Naive thymus-derived CD4-positive, alpha-beta T cell (primary cell): ENCODE measurements at regions of chr17 and their contacts with region 1.

Region 1: GRCh38 chr17:732067-732901 is at the start of gene TLCD3A:
- DNase-seq: peak in 6 of 9 donors; percentile 13 to 80 (median 26)
- ATAC-seq: peak; percentile 82
- H3K4me3 ChIP-seq: peak within 1 kb of the TSS; percentile 41
- H3K4me3 Mint-ChIP-seq: peak within 1 kb of the TSS; percentile 67 to 90 (median 84)
- H3K27ac ChIP-seq: peak within 1 kb of the TSS; percentile 29
- H3K27ac Mint-ChIP-seq: peak within 1 kb of the TSS in 3 of 9 donors; percentile 23 to 86 (median 47)
- H3K4me1 ChIP-seq: peaks cover 4 to 9% of the 10 kb centered on the region in 2 donors
- H3K4me1 Mint-ChIP-seq: peaks cover 0 to 35% (median 6%) of the 10 kb centered on the region in 7 donors
- H3K27me3 ChIP-seq: no peaks in the 10 kb centered on the region
- H3K27me3 Mint-ChIP-seq: peaks cover 0 to 9% (median 0%) of the 10 kb centered on the region in 5 donors
- total RNA-seq, gene TLCD3A: 0.54 to 21.5 (median 1.2) TPM

Region 2: DNA sequence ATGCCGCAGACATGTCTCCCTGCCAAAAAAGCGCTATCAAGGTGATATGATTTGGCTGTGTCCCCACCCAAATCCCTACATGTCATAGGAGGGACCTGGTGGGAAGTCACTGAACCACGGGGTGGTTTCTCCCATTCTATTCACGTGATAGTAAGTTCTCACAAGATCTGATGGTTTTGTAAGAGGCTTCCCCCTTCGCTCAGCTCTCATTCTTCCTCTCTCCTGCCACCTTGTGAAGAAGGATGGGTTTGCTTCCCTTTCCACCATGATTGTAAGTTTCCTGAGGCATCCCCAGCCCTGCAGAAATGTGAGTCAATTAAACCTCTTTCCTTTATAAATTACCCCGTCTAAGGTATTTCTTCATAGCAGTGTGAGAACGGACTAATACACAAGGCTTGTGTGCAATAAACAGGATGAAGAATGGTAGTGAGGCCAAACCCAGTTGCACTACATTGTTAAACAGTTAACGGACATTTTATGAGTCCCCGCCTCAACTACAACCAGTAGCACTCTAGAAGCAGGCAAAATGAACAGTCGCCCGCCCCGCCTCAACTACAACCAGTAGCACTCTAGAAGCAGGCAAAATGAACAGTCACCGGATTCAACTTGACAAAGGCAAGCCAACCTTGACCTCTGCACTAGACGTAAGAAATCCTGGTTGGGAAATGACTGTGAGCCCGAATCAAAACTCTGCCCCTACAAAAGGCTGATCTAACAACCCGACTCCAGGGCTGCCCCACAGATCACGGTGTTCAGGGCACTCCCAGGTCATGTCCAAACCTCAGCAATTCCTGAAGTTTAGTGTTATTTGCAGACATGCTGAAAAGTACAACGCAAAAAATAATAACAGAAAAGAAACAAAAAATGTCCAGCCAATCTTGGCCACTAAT is 43.9 kb before region 1 on chr17:
- CTCF ChIA-PET with region 1: no interaction called
- POLR2A ChIA-PET with region 1: no interaction called
- intact Hi-C with region 1: no loop called
- DNase-seq: peak in 4 of 9 donors; percentile 6 to 27 (median 20)
- ATAC-seq: no peak
- H3K4me3 ChIP-seq: no peak overlapping the region
- H3K4me3 Mint-ChIP-seq: no peak overlapping the region
- H3K27ac ChIP-seq: no peak overlapping the region
- H3K27ac Mint-ChIP-seq: peak overlapping the region in 2 of 9 donors; percentile 24 to 34
- H3K4me1 ChIP-seq: peaks cover 0 to 2% of the 10 kb centered on the region in 2 donors
- H3K4me1 Mint-ChIP-seq: peaks cover 6 to 13% (median 12%) of the 10 kb centered on the region in 7 donors
- H3K27me3 ChIP-seq: no peaks in the 10 kb centered on the region
- H3K27me3 Mint-ChIP-seq: no peaks in the 10 kb centered on the region

Region 3: GRCh38 chr17:704111-704864 is 28.0 kb before region 1 on chr17:
- CTCF ChIA-PET with region 1: no interaction called
- POLR2A ChIA-PET with region 1: no interaction called
- intact Hi-C with region 1: no loop called
- DNase-seq: no peak
- ATAC-seq: no peak
- H3K4me3 ChIP-seq: no peak overlapping the region
- H3K4me3 Mint-ChIP-seq: no peak overlapping the region
- H3K27ac ChIP-seq: no peak overlapping the region
- H3K27ac Mint-ChIP-seq: peak overlapping the region in 5 of 9 donors; percentile 5 to 49 (median 31)
- H3K4me1 ChIP-seq: no peaks in the 10 kb centered on the region
- H3K4me1 Mint-ChIP-seq: peaks cover 8 to 30% (median 15%) of the 10 kb centered on the region in 7 donors
- H3K27me3 ChIP-seq: no peaks in the 10 kb centered on the region
- H3K27me3 Mint-ChIP-seq: no peaks in the 10 kb centered on the region

Region 4: GRCh38 chr17:716238-716637 is 16.0 kb before region 1 on chr17:
- CTCF ChIA-PET with region 1: no interaction called
- POLR2A ChIA-PET with region 1: no interaction called
- intact Hi-C with region 1: loop called (anchors 1 kb)
- DNase-seq: no peak
- ATAC-seq: no peak
- H3K4me3 ChIP-seq: no peak overlapping the region
- H3K4me3 Mint-ChIP-seq: peak overlapping the region in 4 of 10 donors; percentile 35 to 80 (median 60)
- H3K27ac ChIP-seq: no peak overlapping the region
- H3K27ac Mint-ChIP-seq: no peak overlapping the region
- H3K4me1 ChIP-seq: peaks cover 10 to 12% of the 10 kb centered on the region in 2 donors
- H3K4me1 Mint-ChIP-seq: peaks cover 21 to 35% (median 28%) of the 10 kb centered on the region in 7 donors
- H3K27me3 ChIP-seq: no peaks in the 10 kb centered on the region
- H3K27me3 Mint-ChIP-seq: peaks cover 0 to 2% (median 0%) of the 10 kb centered on the region in 5 donors

Region 5: GRCh38 chr17:752002-752619 is 19.8 kb after region 1 on chr17 and contains the start of gene GEMIN4:
- CTCF ChIA-PET with region 1: interaction called, 4 read pairs
- POLR2A ChIA-PET with region 1: interaction called, 3 read pairs
- intact Hi-C with region 1: loop called (anchors 1 to 2 kb)
- DNase-seq: peak; percentile 92 to 100 (median 98)
- ATAC-seq: peak; percentile 96
- H3K4me3 ChIP-seq: peak within 1 kb of the TSS; percentile 80
- H3K4me3 Mint-ChIP-seq: peak within 1 kb of the TSS; percentile 90 to 97 (median 96)
- H3K27ac ChIP-seq: peak within 1 kb of the TSS; percentile 81
- H3K27ac Mint-ChIP-seq: peak within 1 kb of the TSS; percentile 88 to 98 (median 96)
- H3K4me1 ChIP-seq: peaks cover 15 to 22% of the 10 kb centered on the region in 2 donors
- H3K4me1 Mint-ChIP-seq: peaks cover 32 to 43% (median 40%) of the 10 kb centered on the region in 7 donors
- H3K27me3 ChIP-seq: no peaks in the 10 kb centered on the region
- H3K27me3 Mint-ChIP-seq: no peaks in the 10 kb centered on the region
- total RNA-seq, gene GEMIN4: 15.5 to 35.0 (median 28.9) TPM

Region 6: DNA sequence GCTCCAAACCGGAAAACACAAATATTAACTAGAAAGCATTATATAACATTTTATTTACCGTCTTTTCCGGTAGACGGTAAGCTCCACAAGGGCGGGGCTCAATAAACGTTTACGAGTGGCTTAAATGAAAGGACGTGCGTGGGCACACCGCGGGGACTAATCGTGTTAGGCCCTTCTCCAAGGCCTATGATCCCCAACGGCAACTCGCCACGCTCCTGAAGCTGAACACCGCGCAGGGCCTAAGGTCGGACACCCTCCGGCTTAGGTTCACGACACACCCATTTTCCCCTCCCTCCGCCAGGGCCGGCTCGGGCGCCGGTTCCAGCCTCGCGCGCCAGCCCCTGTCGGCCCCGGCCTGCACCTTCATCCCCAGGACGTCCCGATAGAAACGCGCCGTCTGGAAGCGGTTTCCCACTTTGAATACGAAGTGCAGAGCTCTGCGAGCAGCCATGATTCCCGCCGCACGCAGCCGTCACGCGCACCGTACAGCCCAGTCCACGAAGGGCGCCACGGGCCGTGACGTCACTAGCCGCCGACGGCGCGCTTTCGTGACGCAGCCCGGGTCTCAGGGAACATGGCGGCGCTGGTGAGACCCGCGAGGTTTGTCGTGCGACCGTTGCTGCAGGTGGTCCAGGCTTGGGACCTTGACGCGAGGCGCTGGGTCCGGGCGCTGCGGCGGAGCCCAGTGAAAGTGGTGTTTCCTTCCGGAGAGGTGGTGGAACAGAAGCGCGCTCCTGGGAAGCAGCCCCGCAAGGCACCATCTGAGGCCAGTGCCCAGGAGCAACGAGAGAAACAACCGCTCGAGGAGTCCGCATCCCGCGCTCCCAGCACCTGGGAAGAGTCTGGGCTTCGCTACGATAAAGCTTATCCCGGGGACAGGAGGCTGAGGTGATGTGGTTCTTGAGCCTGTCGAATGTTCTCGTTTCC is 49.8 kb after region 1 on chr17 and contains the starts of genes GLOD4 and MRM3:
- CTCF ChIA-PET with region 1: interaction called, 3 read pairs
- POLR2A ChIA-PET with region 1: no interaction called
- intact Hi-C with region 1: loop called in 1 of 2 experiments (anchors 1 kb)
- DNase-seq: peak; percentile 92 to 100 (median 96)
- ATAC-seq: peak; percentile 98
- H3K4me3 ChIP-seq: peak within 1 kb of the TSS; percentile 88
- H3K4me3 Mint-ChIP-seq: peak within 1 kb of the TSS; percentile 95 to 98 (median 97)
- H3K27ac ChIP-seq: peak within 1 kb of the TSS; percentile 84
- H3K27ac Mint-ChIP-seq: peak within 1 kb of the TSS; percentile 95 to 98 (median 97)
- H3K4me1 ChIP-seq: peaks cover 16 to 24% of the 10 kb centered on the region in 2 donors
- H3K4me1 Mint-ChIP-seq: peaks cover 13 to 54% (median 38%) of the 10 kb centered on the region in 7 donors
- H3K27me3 ChIP-seq: no peaks in the 10 kb centered on the region
- H3K27me3 Mint-ChIP-seq: no peaks in the 10 kb centered on the region
- total RNA-seq, gene GLOD4: 60.1 to 79.0 (median 77.6) TPM
- total RNA-seq, gene MRM3: 19.3 to 47.1 (median 25.9) TPM

Region 7: GRCh38 chr17:801660-802059 is 69.4 kb after region 1 on chr17:
- CTCF ChIA-PET with region 1: no interaction called
- POLR2A ChIA-PET with region 1: no interaction called
- intact Hi-C with region 1: no loop called
- DNase-seq: no peak
- ATAC-seq: no peak
- H3K4me3 ChIP-seq: no peak overlapping the region
- H3K4me3 Mint-ChIP-seq: no peak overlapping the region
- H3K27ac ChIP-seq: no peak overlapping the region
- H3K27ac Mint-ChIP-seq: no peak overlapping the region
- H3K4me1 ChIP-seq: no peaks in the 10 kb centered on the region
- H3K4me1 Mint-ChIP-seq: peaks cover 0 to 2% (median 0%) of the 10 kb centered on the region in 7 donors
- H3K27me3 ChIP-seq: no peaks in the 10 kb centered on the region
- H3K27me3 Mint-ChIP-seq: no peaks in the 10 kb centered on the region